Cardiac septum (tissue), 1 donor: ENCODE measurements at regions of chr10 and their contacts with region 1.

Region 1: GRCh38 chr10:62560199-62560819 is 186.1 kb downstream of the ZNF365 start:
- DNase-seq: no peak

Region 2: GRCh38 chr10:62384057-62384446 is 176.3 kb before region 1 on chr10:
- intact Hi-C with region 1: loop called (anchors 10 kb)
- DNase-seq: no peak

Region 3: GRCh38 chr10:62456611-62457101 is 103.7 kb before region 1 on chr10:
- intact Hi-C with region 1: loop called (anchors 10 kb)
- DNase-seq: no peak

Region 4: GRCh38 chr10:62582804-62583208 is 22.5 kb after region 1 on chr10:
- intact Hi-C with region 1: loop called (anchors 2 kb)
- DNase-seq: peak; percentile 83